ENCODE measurements at regions of chr9 and their contacts with region 1.

Region 1: GRCh38 chr9:113398796-113399195 is 2.3 kb downstream of the ALAD start:
- DNase-seq: no peak
- H3K4me3 ChIP-seq: peak overlapping the region in 1 of 4 donors; percentile 94
- H3K27ac ChIP-seq: peak overlapping the region; percentile 44 to 89 (median 84)
- H3K4me1 ChIP-seq: peaks cover 28 to 63% (median 52%) of the 10 kb centered on the region in 4 donors
- H3K27me3 ChIP-seq: no peaks in the 10 kb centered on the region
- CTCF ChIP-seq: no peak
- EP300 ChIP-seq: no peak
- POLR2A ChIP-seq: no peak

Region 2: GRCh38 chr9:113340017-113340699 is 58.6 kb before region 1 on chr9 and contains the start of gene WDR31:
- intact Hi-C with region 1: loop called (anchors 10 kb)
- DNase-seq: peak; percentile 90 to 97
- H3K4me3 ChIP-seq: peak within 1 kb of the TSS; percentile 72 to 93 (median 92)
- H3K27ac ChIP-seq: peak within 1 kb of the TSS; percentile 72 to 87 (median 76)
- H3K4me1 ChIP-seq: peaks cover 8 to 37% (median 20%) of the 10 kb centered on the region in 4 donors
- H3K27me3 ChIP-seq: no peaks in the 10 kb centered on the region
- CTCF ChIP-seq: peak in 1 of 7 experiments; percentile 4
- EP300 ChIP-seq: no peak
- POLR2A ChIP-seq: no peak
- total RNA-seq, gene WDR31: 0.29 to 5.0 (median 0.96) TPM in 4 of 5 donors, not detected in the other

Measured in stomach (tissue), 19 donors.